A549 (cell line): ENCODE measurements at regions of chr7 and their contacts with region 1.

Region 1: GRCh38 chr7:80428161-80429054 is 83.5 kb downstream of the GNAT3 start:
- DNase-seq: peak; percentile 28 to 79
- ATAC-seq: peak; percentile 96 to 97
- H3K4me3 ChIP-seq: no peak overlapping the region
- H3K27ac ChIP-seq: peak overlapping the region in 1 of 2 experiments; percentile 45; a peak in 1 of 6 replicates
- H3K4me1 ChIP-seq: peaks cover 13% of the 10 kb centered on the region; the same call in 2 of the 3 replicates
- CTCF ChIP-seq: peak; percentile 90
- EP300 ChIP-seq: no peak
- POLR2A ChIP-seq: no peak
- RAD21 ChIP-seq: peak; percentile 94 to 96

Region 2: GRCh38 chr7:80357530-80357929 is 70.9 kb before region 1 on chr7:
- CTCF ChIA-PET with region 1: no interaction called
- POLR2A ChIA-PET with region 1: no interaction called
- DNase-seq: no peak
- ATAC-seq: no peak
- H3K4me3 ChIP-seq: no peak overlapping the region
- H3K27ac ChIP-seq: no peak overlapping the region
- H3K4me1 ChIP-seq: peaks cover 7% of the 10 kb centered on the region
- CTCF ChIP-seq: no peak
- EP300 ChIP-seq: no peak
- POLR2A ChIP-seq: no peak
- RAD21 ChIP-seq: no peak

Region 3: GRCh38 chr7:80439894-80440821 is 11.8 kb after region 1 on chr7:
- CTCF ChIA-PET with region 1: interaction called, 16 read pairs
- POLR2A ChIA-PET with region 1: no interaction called
- DNase-seq: no peak
- ATAC-seq: no peak; a peak in 2 of 6 replicates
- H3K4me3 ChIP-seq: no peak overlapping the region
- H3K27ac ChIP-seq: peak overlapping the region in 1 of 2 experiments; percentile 33; a peak in 3 of 6 replicates
- H3K4me1 ChIP-seq: peaks cover 16% of the 10 kb centered on the region
- CTCF ChIP-seq: no peak
- EP300 ChIP-seq: no peak
- POLR2A ChIP-seq: no peak
- RAD21 ChIP-seq: no peak

Region 4: GRCh38 chr7:80651471-80651870 is 223.1 kb after region 1 on chr7:
- CTCF ChIA-PET with region 1: interaction called, 13 read pairs
- POLR2A ChIA-PET with region 1: no interaction called
- DNase-seq: no peak
- ATAC-seq: no peak
- H3K4me3 ChIP-seq: no peak overlapping the region
- H3K27ac ChIP-seq: no peak overlapping the region
- H3K4me1 ChIP-seq: no peaks in the 10 kb centered on the region
- CTCF ChIP-seq: no peak
- EP300 ChIP-seq: no peak
- POLR2A ChIP-seq: no peak
- RAD21 ChIP-seq: no peak

Region 5: GRCh38 chr7:80681272-80681885 is 253.0 kb after region 1 on chr7:
- CTCF ChIA-PET with region 1: interaction called, 36 read pairs
- POLR2A ChIA-PET with region 1: no interaction called
- DNase-seq: peak; percentile 46 to 54
- ATAC-seq: peak; percentile 94 to 97
- H3K4me3 ChIP-seq: no peak overlapping the region
- H3K27ac ChIP-seq: no peak overlapping the region
- H3K4me1 ChIP-seq: peaks cover 8% of the 10 kb centered on the region; the same call in 2 of the 3 replicates
- CTCF ChIP-seq: peak; percentile 60
- EP300 ChIP-seq: no peak
- POLR2A ChIP-seq: no peak
- RAD21 ChIP-seq: peak; percentile 58 to 64